Naive thymus-derived CD4-positive, alpha-beta T cell (primary cell): ENCODE measurements at regions of chr16 and their contacts with region 1.

Region 1: DNA sequence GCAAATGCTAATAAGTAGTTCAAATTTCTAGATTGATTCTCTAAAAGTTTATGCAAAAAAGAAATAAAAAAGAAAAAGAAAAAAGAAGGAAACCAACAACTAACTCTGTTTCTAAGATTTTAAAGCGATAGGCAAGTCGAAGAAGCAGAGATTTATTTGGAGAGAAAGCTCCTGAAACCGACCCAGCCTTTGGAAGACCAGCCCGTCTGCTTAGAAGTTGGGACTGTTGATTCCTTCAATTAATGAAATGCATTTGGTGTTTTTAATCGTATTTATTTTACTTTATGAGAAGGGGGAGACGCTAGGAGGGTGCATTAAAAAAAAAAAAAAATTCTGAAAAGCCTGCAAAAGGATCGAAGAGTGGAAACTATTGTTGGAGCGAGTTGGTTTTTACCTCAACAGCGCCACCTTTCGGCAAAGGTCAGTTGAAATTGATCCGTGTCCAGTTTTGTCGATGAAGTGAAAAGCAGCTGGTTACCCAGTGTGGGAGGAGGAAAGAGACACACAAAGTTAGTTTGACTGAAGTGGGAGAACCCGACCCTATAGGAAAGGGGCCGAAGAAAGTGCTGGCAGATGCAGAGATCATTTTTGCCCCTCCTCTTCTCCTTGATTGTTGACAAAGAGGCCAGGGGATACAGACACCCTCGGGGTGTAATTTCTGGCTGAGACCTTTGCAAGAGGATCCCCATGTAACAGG is 1.5 kb upstream of the MAF start:
- DNase-seq: peak; percentile 51 to 78 (median 72)
- ATAC-seq: peak; percentile 20
- H3K4me3 ChIP-seq: peak overlapping the region; percentile 84
- H3K4me3 Mint-ChIP-seq: peak overlapping the region; percentile 90 to 98 (median 94)
- H3K27ac ChIP-seq: no peak overlapping the region
- H3K27ac Mint-ChIP-seq: peak overlapping the region in 7 of 9 donors; percentile 3 to 98 (median 66)
- H3K4me1 ChIP-seq: peaks cover 4 to 7% of the 10 kb centered on the region in 2 donors
- H3K4me1 Mint-ChIP-seq: peaks cover 6 to 47% (median 33%) of the 10 kb centered on the region in 7 donors
- H3K27me3 ChIP-seq: no peaks in the 10 kb centered on the region
- H3K27me3 Mint-ChIP-seq: peaks cover 15 to 24% (median 20%) of the 10 kb centered on the region in 5 donors

Region 2: GRCh38 chr16:78705694-78706093 is 896.4 kb before region 1 on chr16:
- CTCF ChIA-PET with region 1: no interaction called
- POLR2A ChIA-PET with region 1: no interaction called
- intact Hi-C with region 1: loop called in 1 of 2 experiments (anchors 1 kb)
- DNase-seq: peak in 5 of 9 donors; percentile 7 to 26 (median 12)
- ATAC-seq: peak; percentile 45
- H3K4me3 ChIP-seq: no peak overlapping the region
- H3K4me3 Mint-ChIP-seq: no peak overlapping the region
- H3K27ac ChIP-seq: no peak overlapping the region
- H3K27ac Mint-ChIP-seq: no peak overlapping the region
- H3K4me1 ChIP-seq: no peaks in the 10 kb centered on the region
- H3K4me1 Mint-ChIP-seq: peaks cover 0 to 8% (median 0%) of the 10 kb centered on the region in 7 donors
- H3K27me3 ChIP-seq: no peaks in the 10 kb centered on the region
- H3K27me3 Mint-ChIP-seq: no peaks in the 10 kb centered on the region

Region 3: GRCh38 chr16:79071424-79071823 is 530.7 kb before region 1 on chr16:
- CTCF ChIA-PET with region 1: no interaction called
- POLR2A ChIA-PET with region 1: no interaction called
- intact Hi-C with region 1: loop called in 1 of 2 experiments (anchors 5 kb)
- DNase-seq: no peak
- ATAC-seq: no peak
- H3K4me3 ChIP-seq: no peak overlapping the region
- H3K4me3 Mint-ChIP-seq: no peak overlapping the region
- H3K27ac ChIP-seq: no peak overlapping the region
- H3K27ac Mint-ChIP-seq: no peak overlapping the region
- H3K4me1 ChIP-seq: no peaks in the 10 kb centered on the region
- H3K4me1 Mint-ChIP-seq: peaks cover 14 to 53% (median 44%) of the 10 kb centered on the region in 7 donors
- H3K27me3 ChIP-seq: no peaks in the 10 kb centered on the region
- H3K27me3 Mint-ChIP-seq: peaks cover 0 to 11% (median 1%) of the 10 kb centered on the region in 5 donors

Region 4: DNA sequence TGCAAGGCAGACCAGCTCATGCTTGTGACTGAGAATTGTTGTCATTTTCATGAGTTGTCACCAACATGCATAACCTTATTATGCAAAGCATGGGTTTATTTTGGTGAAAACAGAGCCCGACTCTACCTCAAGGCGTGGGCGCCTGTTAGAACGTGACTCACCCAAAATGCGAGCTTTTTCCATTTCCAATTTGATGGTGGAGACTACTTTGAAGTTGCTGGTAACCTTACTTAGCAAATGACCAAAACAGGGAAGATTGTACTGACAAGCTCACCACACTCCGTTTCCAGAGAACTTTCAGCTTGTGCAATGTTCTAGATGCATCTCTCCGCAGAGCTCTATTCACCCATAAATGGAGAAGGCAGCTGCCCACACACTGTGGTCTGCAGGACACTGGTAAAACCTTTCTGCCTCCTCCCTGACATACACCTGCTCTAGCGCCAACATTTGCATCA is 286.0 kb before region 1 on chr16:
- CTCF ChIA-PET with region 1: no interaction called
- POLR2A ChIA-PET with region 1: no interaction called
- intact Hi-C with region 1: loop called in 1 of 2 experiments (anchors 5 kb)
- DNase-seq: peak in 1 of 9 donors; percentile 72
- ATAC-seq: no peak
- H3K4me3 ChIP-seq: no peak overlapping the region
- H3K4me3 Mint-ChIP-seq: peak overlapping the region in 1 of 10 donors; percentile 35
- H3K27ac ChIP-seq: no peak overlapping the region
- H3K27ac Mint-ChIP-seq: peak overlapping the region in 1 of 9 donors; percentile 70
- H3K4me1 ChIP-seq: peaks cover 0 to 4% of the 10 kb centered on the region in 2 donors
- H3K4me1 Mint-ChIP-seq: peaks cover 0 to 24% (median 0%) of the 10 kb centered on the region in 7 donors
- H3K27me3 ChIP-seq: no peaks in the 10 kb centered on the region
- H3K27me3 Mint-ChIP-seq: peaks cover under 1 to 48% (median 19%) of the 10 kb centered on the region in 5 donors

Region 5: GRCh38 chr16:79713609-79714309 is 111.7 kb after region 1 on chr16:
- CTCF ChIA-PET with region 1: no interaction called
- POLR2A ChIA-PET with region 1: no interaction called
- intact Hi-C with region 1: loop called in 1 of 2 experiments (anchors 5 kb)
- DNase-seq: no peak
- ATAC-seq: no peak
- H3K4me3 ChIP-seq: no peak overlapping the region
- H3K4me3 Mint-ChIP-seq: peak overlapping the region in 1 of 10 donors; percentile 63
- H3K27ac ChIP-seq: no peak overlapping the region
- H3K27ac Mint-ChIP-seq: peak overlapping the region in 1 of 9 donors; percentile 56
- H3K4me1 ChIP-seq: no peaks in the 10 kb centered on the region
- H3K4me1 Mint-ChIP-seq: peaks cover 0 to 23% (median 0%) of the 10 kb centered on the region in 7 donors
- H3K27me3 ChIP-seq: peaks cover 0 to 7% of the 10 kb centered on the region in 2 donors
- H3K27me3 Mint-ChIP-seq: peaks cover 4 to 20% (median 12%) of the 10 kb centered on the region in 5 donors

Region 6: DNA sequence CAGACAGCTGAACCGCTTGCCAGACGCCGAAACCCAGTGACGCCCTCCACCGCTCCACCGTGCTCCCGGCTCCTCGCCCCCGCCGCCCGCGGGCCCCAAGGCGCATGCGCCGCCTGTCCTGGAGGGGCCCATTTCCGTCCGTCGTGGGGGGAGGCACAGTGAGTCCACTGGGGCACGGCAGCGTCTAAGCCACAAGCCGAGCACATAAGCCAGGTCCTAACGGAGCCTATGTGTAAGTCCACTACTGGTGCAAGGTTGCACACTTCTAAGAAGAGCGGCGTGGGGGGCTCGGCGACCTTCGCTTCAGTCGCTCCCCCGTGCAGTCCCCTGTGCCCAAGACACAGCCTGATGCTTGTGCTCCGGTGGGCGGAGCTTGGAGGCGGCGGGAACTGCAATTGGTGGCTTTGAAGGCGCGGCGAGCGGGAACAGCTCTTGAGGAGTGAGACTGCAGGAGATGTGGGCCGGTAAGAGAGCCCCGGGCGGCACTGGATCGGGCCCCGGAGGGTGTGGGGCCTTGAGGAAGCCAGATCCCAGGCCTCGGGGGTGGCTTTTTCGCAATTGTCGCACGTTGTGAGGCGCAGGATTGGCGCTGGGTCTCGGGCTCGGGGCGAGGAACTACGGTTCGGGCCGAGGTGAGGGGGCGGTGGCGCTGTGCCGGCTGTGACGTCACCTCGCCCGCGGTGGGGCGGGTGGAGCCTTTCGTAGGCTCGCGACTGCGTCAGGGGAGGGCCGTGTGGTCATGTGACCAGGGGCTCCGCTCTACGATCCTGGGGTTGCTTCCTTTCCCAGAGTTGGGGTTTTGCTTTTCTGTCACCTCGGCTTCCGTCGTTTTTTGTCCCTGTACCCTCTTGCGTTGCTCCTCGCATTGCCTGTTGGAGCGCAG is 1405.0 kb after region 1 on chr16 and contains the starts of genes CENPN and CMC2:
- CTCF ChIA-PET with region 1: no interaction called
- POLR2A ChIA-PET with region 1: no interaction called
- intact Hi-C with region 1: loop called (anchors 5 to 10 kb)
- DNase-seq: peak; percentile 98 to 100 (median 99)
- ATAC-seq: peak; percentile 89
- H3K4me3 ChIP-seq: peak within 1 kb of the TSS; percentile 83
- H3K4me3 Mint-ChIP-seq: peak within 1 kb of the TSS; percentile 83 to 100 (median 96)
- H3K27ac ChIP-seq: peak within 1 kb of the TSS; percentile 95
- H3K27ac Mint-ChIP-seq: peak within 1 kb of the TSS; percentile 97 to 100 (median 100)
- H3K4me1 ChIP-seq: peaks cover 20 to 21% of the 10 kb centered on the region in 2 donors
- H3K4me1 Mint-ChIP-seq: peaks cover 21 to 70% (median 40%) of the 10 kb centered on the region in 7 donors
- H3K27me3 ChIP-seq: no peaks in the 10 kb centered on the region
- H3K27me3 Mint-ChIP-seq: no peaks in the 10 kb centered on the region
- total RNA-seq, gene CENPN: 1.4 to 41.8 (median 6.9) TPM
- total RNA-seq, gene CMC2: 28.3 to 78.4 (median 40.8) TPM